Activated CD8-positive, alpha-beta memory T cell treated with anti-CD3 and anti-CD28 coated beads, Interleukin-2, amount 10 ng/mL, durations not matched to agents 7 days and 5 days (primary cell): ENCODE measurements at regions of chr1 and their contacts with region 1.

Region 1: DNA sequence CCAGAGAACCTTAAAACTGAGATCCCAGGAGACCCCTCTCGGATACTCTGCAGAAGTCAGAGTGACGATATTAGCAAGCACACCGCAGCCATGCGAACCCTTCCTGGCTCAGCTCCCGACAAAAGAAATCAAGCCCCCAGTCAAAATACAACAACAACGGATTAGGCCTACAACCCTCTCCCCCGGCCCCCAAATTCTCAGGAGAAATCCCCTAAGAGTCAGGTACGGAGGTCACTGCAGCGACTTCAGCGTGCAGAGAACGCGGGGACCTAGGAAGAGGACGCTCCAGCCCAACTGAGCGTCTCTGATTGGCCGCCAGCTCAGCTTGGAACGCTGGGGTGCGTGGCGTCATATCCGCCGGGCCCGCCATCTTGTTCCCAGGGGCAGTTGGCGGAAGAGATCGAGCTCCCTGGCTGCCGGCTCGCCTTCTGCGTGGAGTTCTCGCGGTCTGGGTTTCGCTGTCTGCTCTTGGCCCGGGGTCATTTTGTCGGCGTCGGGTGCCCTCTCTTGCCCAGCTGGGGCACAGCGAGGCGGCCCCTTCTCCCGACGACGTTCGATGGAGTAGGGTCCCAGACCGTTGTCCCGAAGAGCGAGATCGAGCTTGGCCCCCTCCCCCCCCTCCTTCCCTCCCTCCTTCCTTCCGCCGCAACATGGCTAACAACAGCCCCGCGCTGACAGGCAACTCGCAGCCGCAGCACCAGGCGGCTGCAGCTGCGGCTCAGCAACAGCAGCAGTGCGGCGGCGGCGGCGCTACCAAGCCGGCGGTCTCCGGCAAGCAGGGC is at the start of gene PRPF38B:
- DNase-seq: peak; percentile 97
- ATAC-seq: peak; percentile 90
- H3K4me3 Mint-ChIP-seq: peak within 1 kb of the TSS; percentile 93
- H3K27ac Mint-ChIP-seq: peak within 1 kb of the TSS; percentile 97
- H3K4me1 Mint-ChIP-seq: peaks cover 37% of the 10 kb centered on the region
- H3K27me3 Mint-ChIP-seq: no peaks in the 10 kb centered on the region
- total RNA-seq, gene PRPF38B: 61.4 to 81.5 TPM

Region 2: DNA sequence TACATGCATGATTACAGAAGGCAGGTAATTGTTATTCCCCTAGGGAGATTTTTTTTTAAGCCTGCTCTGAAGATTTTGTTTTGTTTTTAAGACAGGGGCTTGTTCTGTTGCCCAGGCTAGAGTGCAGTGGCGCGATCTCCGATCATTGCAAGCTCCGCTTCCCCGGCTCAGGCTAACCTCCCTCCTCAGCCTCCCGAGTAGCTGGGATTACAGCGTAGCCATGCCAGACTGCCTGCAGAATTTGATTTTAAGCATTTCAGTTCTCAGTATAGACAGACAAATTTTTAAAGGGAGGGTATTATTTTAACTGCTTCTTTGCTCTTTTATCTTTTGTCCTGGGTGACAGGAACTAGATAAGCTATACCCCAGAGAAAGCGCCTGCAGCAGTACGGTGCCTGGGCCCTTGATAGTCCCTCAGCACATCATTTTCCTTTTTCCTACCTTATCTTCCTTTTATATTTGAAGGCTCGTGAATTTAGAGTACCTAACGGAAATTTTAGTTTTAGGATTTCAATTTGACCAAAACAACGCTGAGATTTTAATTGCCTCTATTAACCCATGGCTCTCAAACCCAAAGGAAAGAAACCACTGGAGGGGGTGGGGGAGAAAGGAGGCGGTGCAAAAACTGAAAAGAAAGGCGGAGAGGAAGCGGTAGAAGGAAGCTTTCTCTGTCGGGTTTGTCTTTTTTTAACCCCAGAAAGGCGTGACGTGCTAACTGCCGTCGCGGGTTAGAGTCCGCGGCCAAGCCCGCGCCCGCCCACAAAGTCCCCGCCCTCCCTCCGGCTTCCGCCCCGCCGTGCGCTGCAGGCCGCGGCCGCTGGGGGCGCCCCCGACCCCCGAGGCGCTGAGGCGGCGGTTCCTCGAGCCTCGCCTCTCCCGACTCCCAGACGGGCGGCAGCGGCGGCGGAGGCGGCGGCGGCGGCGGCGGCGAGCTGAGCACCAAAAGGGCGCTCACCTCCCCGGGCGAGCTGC is 132.6 kb before region 1 on chr1 and contains the start of gene EEIG2:
- CTCF ChIA-PET with region 1: interaction called, 26 read pairs
- DNase-seq: peak; percentile 92
- ATAC-seq: peak; percentile 84
- H3K4me3 Mint-ChIP-seq: peak within 1 kb of the TSS; percentile 94
- H3K27ac Mint-ChIP-seq: peak within 1 kb of the TSS; percentile 88
- H3K4me1 Mint-ChIP-seq: peaks cover 43% of the 10 kb centered on the region
- H3K27me3 Mint-ChIP-seq: no peaks in the 10 kb centered on the region
- total RNA-seq, gene EEIG2: 11.9 to 16.4 TPM

Region 3: GRCh38 chr1:108643492-108644335 is 48.4 kb before region 1 on chr1:
- CTCF ChIA-PET with region 1: interaction called, 60 read pairs
- DNase-seq: peak; percentile 74
- ATAC-seq: no peak
- H3K4me3 Mint-ChIP-seq: no peak overlapping the region
- H3K27ac Mint-ChIP-seq: peak overlapping the region; percentile 100
- H3K4me1 Mint-ChIP-seq: peaks cover 75% of the 10 kb centered on the region
- H3K27me3 Mint-ChIP-seq: no peaks in the 10 kb centered on the region

Region 4: GRCh38 chr1:108661030-108661620 is 31.0 kb before region 1 on chr1 and contains the start of gene HENMT1:
- CTCF ChIA-PET with region 1: interaction called, 45 read pairs
- DNase-seq: peak; percentile 86
- ATAC-seq: peak; percentile 85
- H3K4me3 Mint-ChIP-seq: peak within 1 kb of the TSS; percentile 82
- H3K27ac Mint-ChIP-seq: peak within 1 kb of the TSS; percentile 96
- H3K4me1 Mint-ChIP-seq: peaks cover 44% of the 10 kb centered on the region
- H3K27me3 Mint-ChIP-seq: no peaks in the 10 kb centered on the region
- total RNA-seq, gene HENMT1: 34.1 to 36.0 TPM

Region 5: GRCh38 chr1:108708691-108709660 is 16.8 kb after region 1 on chr1:
- CTCF ChIA-PET with region 1: interaction called, 19 read pairs
- DNase-seq: peak; percentile 78
- ATAC-seq: peak; percentile 70
- H3K4me3 Mint-ChIP-seq: no peak overlapping the region
- H3K27ac Mint-ChIP-seq: no peak overlapping the region
- H3K4me1 Mint-ChIP-seq: peaks cover 36% of the 10 kb centered on the region
- H3K27me3 Mint-ChIP-seq: peaks cover 9% of the 10 kb centered on the region

Region 6: DNA sequence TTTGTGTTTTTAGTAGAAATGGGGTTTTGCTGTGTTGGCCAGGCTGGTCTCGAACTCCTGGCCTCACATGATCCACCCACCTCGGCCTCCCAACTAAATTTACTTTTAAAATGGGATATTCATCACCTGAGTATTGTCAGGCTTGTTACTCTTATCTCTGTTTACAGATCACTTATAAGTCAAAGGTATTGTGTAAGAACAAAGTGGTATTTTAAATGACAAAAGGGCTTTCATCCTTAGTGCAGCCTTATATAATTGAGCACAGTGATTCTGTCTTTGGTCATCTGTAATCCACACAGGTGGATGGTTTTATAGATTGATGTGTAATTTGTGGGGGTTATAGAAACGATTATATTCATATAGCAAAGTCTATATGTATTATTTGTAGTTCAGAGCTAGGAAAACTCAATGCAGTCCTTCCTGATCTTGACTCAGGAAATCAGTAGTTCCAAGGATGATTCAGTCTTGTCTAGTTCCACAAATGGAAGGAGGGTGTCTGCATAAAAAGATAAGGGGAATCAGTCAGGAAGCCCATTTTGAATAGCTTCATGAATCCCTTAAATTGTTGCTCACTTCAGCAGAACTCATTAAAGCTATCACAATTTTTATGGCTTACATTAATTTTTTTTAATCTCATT is 88.9 kb after region 1 on chr1:
- CTCF ChIA-PET with region 1: no interaction called
- DNase-seq: no peak
- ATAC-seq: no peak
- H3K4me3 Mint-ChIP-seq: no peak overlapping the region
- H3K27ac Mint-ChIP-seq: no peak overlapping the region
- H3K4me1 Mint-ChIP-seq: no peaks in the 10 kb centered on the region
- H3K27me3 Mint-ChIP-seq: no peaks in the 10 kb centered on the region

Region 7: DNA sequence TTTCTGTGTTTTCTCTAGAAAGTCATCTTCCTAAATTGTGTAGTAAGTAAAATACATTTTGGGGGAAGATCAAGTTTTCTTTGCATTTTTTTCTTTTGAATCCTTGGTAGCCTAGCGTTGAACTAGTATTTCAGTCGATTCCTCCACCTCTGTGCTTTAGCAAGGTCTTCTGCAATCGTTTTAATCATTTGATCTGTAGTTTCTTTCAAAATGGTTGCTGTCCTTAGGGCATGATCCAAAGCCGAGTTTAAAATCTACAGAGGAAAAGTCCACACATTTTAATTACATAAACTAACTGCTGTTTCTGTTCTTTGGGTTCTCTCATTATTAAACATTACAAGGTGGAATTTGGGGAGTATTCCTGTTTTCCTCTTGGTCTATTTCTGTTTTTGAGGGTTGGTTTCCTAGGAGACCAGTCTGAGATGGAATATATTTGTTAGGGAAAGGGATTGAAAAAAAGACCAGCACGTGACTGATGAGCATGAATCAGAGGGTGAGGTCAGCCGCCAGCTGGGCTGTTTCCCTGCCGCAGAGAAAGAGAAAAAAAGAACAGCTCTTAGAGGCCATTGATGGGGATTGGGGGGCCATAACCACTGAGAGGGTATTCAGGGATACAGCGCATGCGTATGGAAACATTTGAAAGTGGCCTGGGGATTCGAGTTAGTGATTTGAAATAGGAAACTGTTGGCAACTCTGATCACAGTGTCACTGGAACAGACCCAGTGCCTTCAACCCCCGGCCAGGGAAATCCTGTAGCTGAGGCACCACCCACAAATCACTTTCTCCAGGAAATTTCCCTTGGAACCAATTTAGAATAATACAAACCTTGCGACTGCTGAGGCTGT is 124.1 kb after region 1 on chr1:
- CTCF ChIA-PET with region 1: no interaction called
- DNase-seq: no peak
- ATAC-seq: no peak
- H3K4me3 Mint-ChIP-seq: no peak overlapping the region
- H3K27ac Mint-ChIP-seq: no peak overlapping the region
- H3K4me1 Mint-ChIP-seq: no peaks in the 10 kb centered on the region
- H3K27me3 Mint-ChIP-seq: peaks cover 16% of the 10 kb centered on the region

Region 8: DNA sequence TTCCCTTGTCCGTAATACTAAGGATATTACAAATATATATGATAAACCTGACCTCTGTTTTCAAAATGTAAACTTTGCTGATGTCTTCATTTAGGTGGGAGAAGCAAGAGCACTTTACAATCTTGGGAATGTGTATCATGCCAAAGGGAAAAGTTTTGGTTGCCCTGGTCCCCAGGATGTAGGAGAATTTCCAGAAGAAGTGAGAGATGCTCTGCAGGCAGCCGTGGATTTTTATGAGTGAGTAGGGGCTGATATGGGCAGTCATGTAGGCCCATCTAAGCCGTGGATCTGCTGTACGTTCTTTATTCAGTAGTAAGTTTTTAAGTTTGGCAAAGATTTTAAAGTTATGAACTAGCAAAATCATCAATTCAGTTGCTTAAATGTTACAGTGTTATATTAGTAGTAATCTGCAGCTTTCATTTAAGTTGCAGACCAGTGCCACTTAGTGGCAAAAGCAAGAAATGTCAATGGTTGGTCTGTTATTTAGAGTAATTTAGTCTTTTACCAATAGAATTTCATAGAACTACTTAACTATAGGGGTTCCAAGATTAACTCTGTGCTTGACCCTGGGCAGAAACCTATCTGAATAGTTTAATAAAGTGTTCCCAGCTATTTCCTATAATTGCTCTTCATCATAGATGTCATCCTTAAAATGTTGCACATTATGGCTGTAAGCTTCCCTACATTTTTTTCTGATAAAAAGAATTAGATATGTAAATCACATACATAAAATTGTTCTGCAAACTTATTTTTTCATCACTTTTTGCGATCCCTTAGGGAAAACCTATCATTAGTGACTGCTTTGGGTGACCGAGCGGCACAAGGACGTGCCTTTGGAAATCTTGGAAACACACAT is 206.0 kb after region 1 on chr1:
- CTCF ChIA-PET with region 1: interaction called, 14 read pairs
- DNase-seq: peak; percentile 52
- ATAC-seq: peak; percentile 70
- H3K4me3 Mint-ChIP-seq: no peak overlapping the region
- H3K27ac Mint-ChIP-seq: no peak overlapping the region
- H3K4me1 Mint-ChIP-seq: no peaks in the 10 kb centered on the region
- H3K27me3 Mint-ChIP-seq: no peaks in the 10 kb centered on the region

Region 9: DNA sequence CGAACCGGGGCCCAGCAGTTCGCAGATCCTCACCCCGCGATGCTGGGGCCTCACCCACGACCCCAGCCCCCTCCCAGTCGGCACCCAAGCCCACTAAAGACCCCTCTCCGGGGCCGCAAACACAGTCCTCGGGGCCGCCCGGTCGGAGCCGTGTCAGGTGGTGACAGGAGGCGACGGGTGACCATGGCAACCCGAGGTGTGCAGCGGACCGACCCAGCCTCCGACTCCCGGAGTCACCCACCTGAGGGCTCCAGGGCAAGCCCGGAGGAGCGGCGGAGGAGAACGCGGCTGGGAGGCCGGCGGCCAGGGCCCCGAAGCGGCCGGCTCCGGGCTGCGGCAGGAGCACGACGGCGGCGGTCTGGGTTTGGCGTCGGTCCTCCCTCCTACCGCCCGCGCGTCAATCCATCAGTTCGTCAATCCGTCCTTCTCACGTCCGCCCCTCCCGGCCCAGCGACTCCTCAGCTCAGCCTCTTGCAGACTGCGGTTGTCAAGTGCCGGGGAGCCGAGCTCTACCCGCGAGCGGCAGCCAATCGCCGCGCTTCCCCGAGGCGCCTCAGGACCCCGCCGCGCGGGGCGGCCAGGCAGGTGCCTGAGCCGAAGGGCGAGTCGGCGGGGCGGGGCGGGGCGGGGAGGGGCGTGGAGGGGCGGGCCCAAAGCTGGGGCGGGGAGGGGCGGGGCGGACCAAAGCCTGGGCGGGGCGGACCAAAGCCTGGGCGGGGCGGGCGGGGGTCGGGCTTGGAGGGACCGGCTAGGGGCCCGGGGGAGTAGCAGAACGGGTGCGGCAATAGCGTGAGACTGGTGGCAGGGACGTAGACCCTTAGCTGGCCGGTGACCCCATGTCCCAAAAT is 349.7 kb after region 1 on chr1 and contains the start of gene WDR47:
- CTCF ChIA-PET with region 1: no interaction called
- DNase-seq: peak; percentile 98
- ATAC-seq: peak; percentile 99
- H3K4me3 Mint-ChIP-seq: peak within 1 kb of the TSS; percentile 86
- H3K27ac Mint-ChIP-seq: peak within 1 kb of the TSS; percentile 82
- H3K4me1 Mint-ChIP-seq: peaks cover 22% of the 10 kb centered on the region
- H3K27me3 Mint-ChIP-seq: peaks cover 6% of the 10 kb centered on the region
- total RNA-seq, gene WDR47: 10.7 to 12.0 TPM

Region 10: GRCh38 chr1:109112652-109113285 is 420.6 kb after region 1 on chr1:
- CTCF ChIA-PET with region 1: interaction called, 10 read pairs
- DNase-seq: peak; percentile 93
- ATAC-seq: peak; percentile 71
- H3K4me3 Mint-ChIP-seq: peak overlapping the region; percentile 77
- H3K27ac Mint-ChIP-seq: peak overlapping the region; percentile 48
- H3K4me1 Mint-ChIP-seq: peaks cover 28% of the 10 kb centered on the region
- H3K27me3 Mint-ChIP-seq: peaks cover 34% of the 10 kb centered on the region